PC-9 (cell line): ENCODE measurements at regions of chr3 and their contacts with region 1.

Region 1: GRCh38 chr3:184005941-184006507 is 11.7 kb downstream of the ABCC5 start:
- DNase-seq: peak; percentile 98 to 100
- H3K4me3 ChIP-seq: peak overlapping the region; percentile 22; the same call in 1 of the 2 replicates
- H3K27ac ChIP-seq: peak overlapping the region; percentile 97
- H3K4me1 ChIP-seq: peaks cover 83% of the 10 kb centered on the region
- H3K27me3 ChIP-seq: no peaks in the 10 kb centered on the region
- CTCF ChIP-seq: no peak

Region 2: DNA sequence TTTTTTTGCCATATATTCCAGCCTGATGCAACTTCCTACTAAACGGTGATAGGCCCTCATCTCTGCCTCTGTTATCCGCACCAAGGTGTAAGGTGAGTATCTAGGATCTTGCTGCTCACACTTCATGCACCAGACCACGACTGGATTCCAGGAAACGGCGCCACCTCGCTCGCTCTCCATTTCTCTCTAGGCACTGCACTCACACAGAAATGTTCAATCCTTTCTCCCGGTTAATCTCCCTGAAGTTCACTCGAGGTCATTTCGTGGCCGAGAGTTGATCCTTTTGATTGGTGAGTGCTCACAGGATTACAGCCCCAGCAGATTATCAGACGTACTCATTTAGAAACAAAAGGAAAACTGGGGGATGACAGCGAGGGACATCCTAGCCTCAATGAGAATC is 605.7 kb before region 1 on chr3:
- CTCF ChIA-PET with region 1: no interaction called
- POLR2A ChIA-PET with region 1: no interaction called
- intact Hi-C with region 1: no loop called
- DNase-seq: no peak
- H3K4me3 ChIP-seq: no peak overlapping the region
- H3K27ac ChIP-seq: no peak overlapping the region
- H3K4me1 ChIP-seq: no peaks in the 10 kb centered on the region
- H3K27me3 ChIP-seq: no peaks in the 10 kb centered on the region
- CTCF ChIP-seq: no peak

Region 3: DNA sequence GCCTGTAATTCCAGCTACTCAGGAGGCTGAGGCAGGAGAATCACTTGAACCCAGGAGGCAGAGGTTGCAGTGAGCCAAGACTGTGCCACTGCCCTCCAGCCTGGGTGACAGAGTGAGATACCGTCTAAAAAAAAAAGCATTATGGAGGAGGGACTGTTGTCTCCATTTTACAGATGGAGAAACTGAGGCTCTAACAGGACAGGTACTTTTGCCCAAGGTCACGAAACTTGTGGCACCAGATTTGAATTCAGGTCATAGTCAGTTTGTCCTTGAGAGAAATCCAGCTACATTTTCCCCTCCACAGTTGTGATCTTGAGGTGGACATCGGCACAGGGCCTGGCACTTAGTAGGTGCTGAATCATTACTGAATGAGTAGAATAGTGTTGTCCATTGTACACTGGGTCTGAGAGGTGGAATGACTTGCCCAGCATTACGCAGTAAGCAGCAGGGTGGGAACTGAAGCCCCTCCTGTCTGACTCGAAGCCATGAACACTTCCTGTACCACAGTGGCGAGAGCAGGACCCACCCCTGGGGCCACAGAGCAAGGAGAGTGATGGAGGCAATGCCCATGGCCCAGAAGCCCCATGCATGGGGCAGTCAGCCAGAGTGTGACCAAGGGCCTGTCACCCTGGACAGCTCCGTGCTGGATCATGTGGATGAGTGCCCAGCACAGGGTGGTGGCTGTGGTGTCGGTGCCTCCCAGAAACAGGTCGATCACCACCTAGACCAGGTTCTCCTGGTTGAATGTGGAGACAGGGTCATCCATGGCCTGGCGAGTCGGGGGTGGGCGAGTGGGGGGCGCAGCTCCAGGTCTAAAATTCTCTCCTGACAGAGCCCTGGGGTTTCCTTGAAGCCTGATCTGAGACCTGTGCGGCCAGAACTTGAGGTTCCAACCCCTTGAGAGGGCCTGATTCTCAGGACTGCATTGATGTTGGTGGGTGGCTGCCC is 100.9 kb before region 1 on chr3:
- CTCF ChIA-PET with region 1: interaction called, 11 read pairs
- POLR2A ChIA-PET with region 1: no interaction called
- intact Hi-C with region 1: no loop called
- DNase-seq: no peak
- H3K4me3 ChIP-seq: no peak overlapping the region
- H3K27ac ChIP-seq: no peak overlapping the region
- H3K4me1 ChIP-seq: no peaks in the 10 kb centered on the region
- H3K27me3 ChIP-seq: no peaks in the 10 kb centered on the region
- CTCF ChIP-seq: no peak

Region 4: GRCh38 chr3:183914856-183915255 is 91.2 kb before region 1 on chr3:
- CTCF ChIA-PET with region 1: interaction called, 7 read pairs
- POLR2A ChIA-PET with region 1: no interaction called
- intact Hi-C with region 1: loop called (anchors 1 kb)
- DNase-seq: no peak
- H3K4me3 ChIP-seq: no peak overlapping the region
- H3K27ac ChIP-seq: peak overlapping the region; percentile 63
- H3K4me1 ChIP-seq: peaks cover 48% of the 10 kb centered on the region
- H3K27me3 ChIP-seq: no peaks in the 10 kb centered on the region
- CTCF ChIP-seq: no peak

Region 5: DNA sequence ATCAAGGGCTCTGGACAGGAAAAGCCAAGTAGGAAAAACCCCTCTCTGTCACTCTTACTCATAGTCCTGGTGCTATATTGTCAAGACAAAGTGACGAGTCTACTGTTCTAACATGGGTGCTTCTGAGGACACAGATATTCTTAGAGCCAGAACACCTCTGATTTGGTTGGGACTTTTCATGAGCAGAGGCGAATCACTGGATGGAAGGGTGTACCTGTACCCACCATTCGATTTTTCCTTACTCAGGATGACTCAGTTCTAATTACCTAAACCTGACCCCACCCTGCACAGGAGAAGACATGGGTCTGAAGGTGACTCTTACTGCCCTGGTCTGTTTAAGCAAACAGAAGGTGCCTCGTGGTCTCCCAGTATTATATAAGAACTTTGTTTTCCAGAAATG is 46.8 kb before region 1 on chr3:
- CTCF ChIA-PET with region 1: no interaction called
- POLR2A ChIA-PET with region 1: no interaction called
- intact Hi-C with region 1: loop called (anchors 2 kb)
- DNase-seq: peak; percentile 49 to 93
- H3K4me3 ChIP-seq: no peak overlapping the region
- H3K27ac ChIP-seq: peak overlapping the region; percentile 92
- H3K4me1 ChIP-seq: peaks cover 46% of the 10 kb centered on the region
- H3K27me3 ChIP-seq: no peaks in the 10 kb centered on the region
- CTCF ChIP-seq: no peak

Region 6: GRCh38 chr3:183966251-183966801 is 39.7 kb before region 1 on chr3:
- CTCF ChIA-PET with region 1: no interaction called
- POLR2A ChIA-PET with region 1: interaction called, 8 read pairs
- intact Hi-C with region 1: loop called (anchors 1 kb)
- DNase-seq: peak; percentile 83 to 98
- H3K4me3 ChIP-seq: peak overlapping the region; percentile 27
- H3K27ac ChIP-seq: peak overlapping the region; percentile 99
- H3K4me1 ChIP-seq: peaks cover 72% of the 10 kb centered on the region
- H3K27me3 ChIP-seq: no peaks in the 10 kb centered on the region
- CTCF ChIP-seq: no peak

Region 7: DNA sequence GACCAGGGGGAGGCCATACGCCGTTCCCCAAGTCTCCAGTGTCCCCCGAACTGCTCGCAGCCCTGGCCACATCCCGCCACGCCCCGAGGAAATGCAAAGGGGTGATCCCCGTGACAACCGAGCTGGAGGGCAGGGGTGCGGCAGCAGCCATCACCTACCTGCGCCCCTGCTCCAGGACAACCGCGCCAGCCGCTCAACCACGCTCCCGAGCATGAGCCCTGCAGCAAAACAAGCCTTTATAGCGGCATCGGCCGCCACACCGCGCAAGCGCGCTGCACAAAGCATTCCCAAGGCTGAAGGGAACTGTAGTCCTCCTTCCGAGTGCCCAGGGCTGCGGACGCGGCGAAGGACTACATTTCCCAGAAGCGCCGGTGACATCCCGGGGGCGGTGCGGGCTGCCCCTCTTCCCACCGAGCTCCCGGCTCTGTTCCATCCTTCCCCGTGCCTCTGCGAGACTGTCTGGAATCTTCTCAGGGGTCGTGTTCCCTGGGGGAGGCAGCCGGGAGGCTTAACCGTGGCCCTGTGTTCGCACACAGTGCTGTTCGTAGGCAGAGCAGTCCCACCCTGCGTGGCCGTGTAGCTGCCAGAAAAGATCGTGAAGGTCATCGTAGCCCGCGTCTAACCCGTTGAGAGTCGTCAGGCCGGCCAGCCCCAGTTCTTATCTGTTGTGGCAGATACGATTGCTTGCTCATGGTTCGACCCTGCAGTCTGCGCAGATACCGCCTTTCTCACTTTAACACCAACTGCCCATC is 11.8 kb after region 1 on chr3 and contains the start of gene ABCC5:
- CTCF ChIA-PET with region 1: interaction called, 10 read pairs
- POLR2A ChIA-PET with region 1: interaction called, 13 read pairs
- intact Hi-C with region 1: loop called (anchors 1 kb)
- DNase-seq: peak; percentile 87 to 94
- H3K4me3 ChIP-seq: peak within 1 kb of the TSS; percentile 99
- H3K27ac ChIP-seq: peak within 1 kb of the TSS; percentile 58
- H3K4me1 ChIP-seq: peaks cover 34% of the 10 kb centered on the region
- H3K27me3 ChIP-seq: no peaks in the 10 kb centered on the region
- CTCF ChIP-seq: peak; percentile 83
- total RNA-seq, gene ABCC5: 133 and 151 TPM in 2 replicates

Region 8: GRCh38 chr3:184135149-184135910 is 129.3 kb after region 1 on chr3 and contains the start of gene EIF2B5:
- CTCF ChIA-PET with region 1: no interaction called
- POLR2A ChIA-PET with region 1: interaction called, 5 read pairs
- intact Hi-C with region 1: loop called (anchors 2 kb)
- DNase-seq: peak; percentile 87 to 88
- H3K4me3 ChIP-seq: peak within 1 kb of the TSS; percentile 80
- H3K27ac ChIP-seq: peak within 1 kb of the TSS; percentile 79
- H3K4me1 ChIP-seq: peaks cover 25% of the 10 kb centered on the region
- H3K27me3 ChIP-seq: no peaks in the 10 kb centered on the region
- CTCF ChIP-seq: peak; percentile 48
- total RNA-seq, gene EIF2B5: 45.7 and 54.1 TPM in 2 replicates

Region 9: GRCh38 chr3:184168363-184169120 is 162.5 kb after region 1 on chr3:
- CTCF ChIA-PET with region 1: no interaction called
- POLR2A ChIA-PET with region 1: no interaction called
- intact Hi-C with region 1: no loop called
- DNase-seq: no peak
- H3K4me3 ChIP-seq: no peak overlapping the region
- H3K27ac ChIP-seq: 0 out of 2 replicates have a peak overlapping the region, but pooled peaks have one; percentile 3
- H3K4me1 ChIP-seq: no peaks in the 10 kb centered on the region
- H3K27me3 ChIP-seq: no peaks in the 10 kb centered on the region
- CTCF ChIP-seq: no peak